ENCODE measurements at regions of chr11 and their contacts with region 1.

Region 1: GRCh38 chr11:66022401-66023185 is 3.7 kb downstream of the CATSPER1 start:
- DNase-seq: peak; percentile 75
- H3K4me3 Mint-ChIP-seq: no peak overlapping the region
- H3K27ac Mint-ChIP-seq: no peak overlapping the region
- H3K4me1 Mint-ChIP-seq: peaks cover 15% of the 10 kb centered on the region
- H3K27me3 Mint-ChIP-seq: peaks cover 7% of the 10 kb centered on the region

Region 2: GRCh38 chr11:65945430-65945911 is 77.1 kb before region 1 on chr11 and contains the start of gene TSGA10IP:
- CTCF ChIA-PET with region 1: no interaction called
- POLR2A ChIA-PET with region 1: no interaction called
- DNase-seq: no peak
- H3K4me3 Mint-ChIP-seq: no peak within 1 kb of the TSS
- H3K27ac Mint-ChIP-seq: no peak within 1 kb of the TSS
- H3K4me1 Mint-ChIP-seq: peaks cover 3% of the 10 kb centered on the region
- H3K27me3 Mint-ChIP-seq: peaks cover 12% of the 10 kb centered on the region
- total RNA-seq, gene TSGA10IP: not detected

Region 3: GRCh38 chr11:66001942-66002647 is 20.5 kb before region 1 on chr11 and contains the starts of genes BANF1 and EIF1AD:
- CTCF ChIA-PET with region 1: interaction called, 13 read pairs
- POLR2A ChIA-PET with region 1: interaction called, 3 read pairs
- DNase-seq: peak; percentile 95
- H3K4me3 Mint-ChIP-seq: peak within 1 kb of the TSS; percentile 96
- H3K27ac Mint-ChIP-seq: peak within 1 kb of the TSS; percentile 98
- H3K4me1 Mint-ChIP-seq: peaks cover 41% of the 10 kb centered on the region
- H3K27me3 Mint-ChIP-seq: no peaks in the 10 kb centered on the region
- total RNA-seq, gene BANF1: 223 to 236 TPM
- total RNA-seq, gene EIF1AD: 50.4 to 54.4 TPM

Region 4: DNA sequence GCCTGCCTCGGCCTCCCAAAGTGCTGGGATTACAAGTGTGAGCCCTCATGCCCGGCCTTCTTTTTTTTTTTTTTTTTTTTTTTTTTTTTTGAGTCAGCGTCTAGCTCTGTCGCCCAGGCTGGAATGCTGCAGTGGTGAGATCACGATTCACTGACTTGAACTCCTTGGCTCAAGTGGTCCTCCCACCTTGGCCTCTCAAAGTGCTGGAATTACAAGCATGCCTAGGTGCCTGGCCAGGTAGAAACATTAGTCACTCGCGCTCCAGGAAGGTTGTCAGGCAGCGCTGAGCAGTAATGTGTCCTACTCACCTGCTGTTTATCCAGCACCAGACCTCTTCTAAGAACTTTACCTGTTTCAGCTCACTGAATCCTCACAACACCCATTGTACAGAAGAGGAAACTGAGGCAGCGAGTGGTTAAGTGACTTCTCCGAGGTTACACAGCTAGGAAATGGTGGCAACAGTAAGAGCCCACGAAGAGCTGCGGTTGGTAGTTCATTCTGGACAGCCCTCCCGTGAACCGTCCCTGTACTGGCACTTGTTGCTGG is 11.3 kb before region 1 on chr11:
- CTCF ChIA-PET with region 1: interaction called, 15 read pairs
- POLR2A ChIA-PET with region 1: no interaction called
- DNase-seq: no peak
- H3K4me3 Mint-ChIP-seq: no peak overlapping the region
- H3K27ac Mint-ChIP-seq: no peak overlapping the region
- H3K4me1 Mint-ChIP-seq: no peaks in the 10 kb centered on the region
- H3K27me3 Mint-ChIP-seq: peaks cover 28% of the 10 kb centered on the region

Region 5: GRCh38 chr11:66035653-66036333 is 13.2 kb after region 1 on chr11:
- CTCF ChIA-PET with region 1: interaction called, 36 read pairs
- POLR2A ChIA-PET with region 1: no interaction called
- DNase-seq: no peak
- H3K4me3 Mint-ChIP-seq: no peak overlapping the region
- H3K27ac Mint-ChIP-seq: no peak overlapping the region
- H3K4me1 Mint-ChIP-seq: no peaks in the 10 kb centered on the region
- H3K27me3 Mint-ChIP-seq: peaks cover 9% of the 10 kb centered on the region

Region 6: GRCh38 chr11:66045177-66045639 is 22.6 kb after region 1 on chr11:
- CTCF ChIA-PET with region 1: interaction called, 36 read pairs
- POLR2A ChIA-PET with region 1: no interaction called
- DNase-seq: peak; percentile 87
- H3K4me3 Mint-ChIP-seq: no peak overlapping the region
- H3K27ac Mint-ChIP-seq: no peak overlapping the region
- H3K4me1 Mint-ChIP-seq: peaks cover 20% of the 10 kb centered on the region
- H3K27me3 Mint-ChIP-seq: peaks cover 2% of the 10 kb centered on the region

Region 7: DNA sequence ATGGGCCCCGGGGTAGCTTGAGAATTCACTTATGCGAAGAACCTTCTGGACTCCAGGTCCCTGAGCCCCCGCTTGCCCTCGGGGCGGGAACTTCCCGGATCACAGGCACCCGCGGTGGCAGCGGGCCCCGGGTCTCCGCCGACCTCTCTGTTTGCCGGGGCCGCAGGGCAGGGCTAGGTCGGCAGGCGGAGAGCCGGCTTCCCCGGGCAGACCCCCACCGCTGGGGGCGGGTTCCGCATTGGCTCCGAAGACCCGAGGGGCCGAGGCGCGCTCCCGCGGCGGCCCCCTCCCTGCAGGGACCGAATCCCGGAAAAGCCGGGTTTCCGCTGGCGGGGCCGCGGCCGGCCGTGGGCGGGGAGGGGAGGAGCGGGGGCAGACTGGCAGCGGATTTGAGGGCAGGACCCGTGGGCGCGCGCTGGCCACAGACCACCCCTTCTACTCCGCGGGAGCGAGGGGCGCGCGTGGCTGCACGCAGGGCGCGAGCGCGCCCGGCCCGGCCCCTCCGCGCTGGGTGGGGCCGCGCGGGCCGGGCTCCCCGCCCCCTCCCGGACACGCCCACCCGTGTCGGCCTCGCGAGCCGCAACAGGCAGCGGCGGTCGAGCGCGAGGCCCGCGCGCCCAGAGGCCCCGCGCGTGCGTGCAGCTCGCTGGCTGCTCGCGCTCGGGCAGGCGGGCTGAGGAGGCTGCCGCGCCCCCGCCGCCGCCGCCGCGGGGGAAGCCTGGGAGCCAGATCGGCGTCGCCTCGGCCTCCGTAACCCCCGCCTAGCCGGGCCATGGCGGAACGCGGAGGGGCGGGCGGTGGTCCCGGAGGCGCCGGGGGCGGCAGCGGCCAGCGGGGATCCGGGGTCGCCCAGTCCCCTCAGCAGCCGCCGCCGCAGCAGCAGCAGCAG is 47.4 kb after region 1 on chr11 and contains the start of gene PACS1:
- CTCF ChIA-PET with region 1: no interaction called
- POLR2A ChIA-PET with region 1: no interaction called
- DNase-seq: peak; percentile 79
- H3K4me3 Mint-ChIP-seq: peak within 1 kb of the TSS; percentile 89
- H3K27ac Mint-ChIP-seq: peak within 1 kb of the TSS; percentile 94
- H3K4me1 Mint-ChIP-seq: peaks cover 71% of the 10 kb centered on the region
- H3K27me3 Mint-ChIP-seq: no peaks in the 10 kb centered on the region
- total RNA-seq, gene PACS1: 109 TPM

Measured in activated CD4-positive, alpha-beta T cell treated with anti-CD3 and anti-CD28 coated beads, Interleukin-2, amount 10 ng/mL, durations not matched to agents 7 days and 5 days (primary cell).